ENCODE measurements at regions of chr15 and their contacts with region 1.

Region 1: DNA sequence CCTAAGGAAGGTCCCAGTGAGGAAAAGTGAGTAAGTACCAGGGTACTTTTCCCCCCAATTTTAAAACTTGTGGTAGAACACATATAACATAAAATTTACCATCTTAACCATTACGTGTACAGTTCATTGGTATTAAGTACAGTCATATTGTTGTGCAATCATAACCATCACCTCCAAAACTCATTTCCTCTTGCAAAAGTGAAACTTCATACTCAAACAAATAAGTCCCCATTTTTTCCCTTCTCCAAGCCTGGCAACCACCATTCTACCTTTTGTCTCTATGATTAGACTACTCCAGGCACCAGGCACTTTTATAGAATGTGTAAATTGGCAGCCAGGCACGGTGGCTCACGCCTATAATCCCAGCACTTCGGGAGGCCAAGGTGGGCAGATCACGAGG is 12.2 kb downstream of the PRC1 start:
- DNase-seq: no peak
- H3K4me3 ChIP-seq: no peak overlapping the region
- H3K27ac ChIP-seq: no peak overlapping the region
- H3K27me3 ChIP-seq: no peaks in the 10 kb centered on the region
- CTCF ChIP-seq: no peak

Region 2: DNA sequence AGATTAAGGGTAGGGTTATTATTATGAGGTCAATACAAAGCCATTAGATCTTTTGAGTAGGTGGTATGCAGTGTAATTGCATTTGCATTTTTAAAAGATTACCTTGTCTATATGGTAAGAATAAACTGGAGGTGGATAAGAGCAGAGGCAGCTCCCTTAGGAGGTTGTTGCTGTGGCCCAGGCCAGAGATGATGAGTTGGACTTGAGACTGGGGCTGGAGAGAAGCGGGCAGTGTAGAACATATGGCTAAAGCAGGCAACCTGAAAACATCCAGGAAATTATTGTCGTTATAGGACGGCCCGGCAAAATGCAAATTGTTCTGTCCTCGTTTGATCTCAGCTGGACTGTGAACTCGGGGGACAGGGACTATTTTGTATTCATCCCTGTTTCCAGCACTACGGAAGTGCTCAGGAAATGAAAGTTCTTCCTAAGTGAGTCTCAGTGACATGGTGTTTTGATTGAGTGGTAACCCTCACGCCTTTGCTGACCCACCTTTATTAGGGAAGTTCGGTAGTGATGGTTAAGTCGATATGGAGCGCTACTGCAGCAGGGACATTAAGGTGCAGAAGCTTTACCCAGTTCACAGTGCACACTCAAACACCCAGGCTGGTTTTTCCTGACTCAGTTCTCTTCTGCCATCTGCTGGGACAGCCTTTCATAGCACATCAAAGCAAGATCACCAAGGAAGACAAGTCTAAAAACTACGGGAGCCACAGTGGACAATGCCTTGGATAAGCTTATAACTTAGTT is 67.4 kb after region 1 on chr15:
- CTCF ChIA-PET with region 1: interaction called, 12 read pairs
- POLR2A ChIA-PET with region 1: no interaction called
- DNase-seq: peak; percentile 38
- H3K4me3 ChIP-seq: no peak overlapping the region
- H3K27ac ChIP-seq: no peak overlapping the region
- H3K27me3 ChIP-seq: peaks cover 8% of the 10 kb centered on the region
- CTCF ChIP-seq: peak; percentile 84

Region 3: GRCh38 chr15:91357011-91357410 is 374.9 kb after region 1 on chr15:
- CTCF ChIA-PET with region 1: no interaction called
- POLR2A ChIA-PET with region 1: no interaction called
- DNase-seq: no peak
- H3K4me3 ChIP-seq: no peak overlapping the region
- H3K27ac ChIP-seq: no peak overlapping the region
- H3K27me3 ChIP-seq: no peaks in the 10 kb centered on the region
- CTCF ChIP-seq: no peak

Measured in AG04450 (cell line).